AG04450 (cell line): ENCODE measurements at regions of chr11 and their contacts with region 1.

Region 1: DNA sequence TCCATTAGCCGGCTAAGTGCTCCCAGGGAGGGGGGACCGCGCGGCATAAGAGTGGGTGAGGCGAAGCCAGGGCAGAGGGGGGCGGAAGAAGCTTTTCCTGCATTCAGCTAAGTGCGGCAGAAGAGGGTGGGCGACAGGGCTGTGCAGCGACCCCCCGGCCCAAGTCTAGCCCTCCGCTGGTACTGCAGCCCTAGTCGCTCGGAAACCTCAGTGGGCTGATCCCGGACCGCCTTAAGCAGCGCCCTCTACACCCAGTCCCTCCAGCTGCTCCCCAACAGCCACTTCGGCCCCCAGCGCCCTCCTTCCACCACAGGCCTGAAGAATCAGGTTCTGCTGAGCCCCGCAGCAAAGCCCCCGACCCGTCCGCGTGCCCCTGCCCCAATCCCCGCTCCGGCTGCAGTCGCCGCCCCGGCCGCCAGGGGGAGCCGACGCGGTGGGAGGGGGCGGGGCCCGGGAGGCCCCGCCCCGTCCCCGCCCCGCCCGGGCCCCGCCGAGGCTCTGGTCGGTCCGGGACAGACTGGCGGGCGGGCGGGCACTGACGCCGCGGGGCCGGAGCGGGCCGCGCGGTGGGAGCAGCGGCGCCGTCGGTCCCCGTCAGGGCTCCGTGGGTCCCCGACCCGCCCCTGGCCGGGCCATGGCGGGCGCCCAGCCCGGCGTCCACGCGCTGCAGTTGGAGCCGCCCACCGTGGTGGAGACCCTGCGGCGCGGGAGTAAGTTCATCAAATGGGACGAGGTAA is at the start of gene PLCB3:
- DNase-seq: no peak
- H3K4me3 ChIP-seq: peak within 1 kb of the TSS; percentile 77
- H3K27ac ChIP-seq: peak within 1 kb of the TSS; percentile 11
- H3K27me3 ChIP-seq: no peaks in the 10 kb centered on the region
- CTCF ChIP-seq: peak; percentile 53
- polyA plus RNA-seq, gene PLCB3: 11.7 and 13.0 TPM in 2 replicates

Region 2: DNA sequence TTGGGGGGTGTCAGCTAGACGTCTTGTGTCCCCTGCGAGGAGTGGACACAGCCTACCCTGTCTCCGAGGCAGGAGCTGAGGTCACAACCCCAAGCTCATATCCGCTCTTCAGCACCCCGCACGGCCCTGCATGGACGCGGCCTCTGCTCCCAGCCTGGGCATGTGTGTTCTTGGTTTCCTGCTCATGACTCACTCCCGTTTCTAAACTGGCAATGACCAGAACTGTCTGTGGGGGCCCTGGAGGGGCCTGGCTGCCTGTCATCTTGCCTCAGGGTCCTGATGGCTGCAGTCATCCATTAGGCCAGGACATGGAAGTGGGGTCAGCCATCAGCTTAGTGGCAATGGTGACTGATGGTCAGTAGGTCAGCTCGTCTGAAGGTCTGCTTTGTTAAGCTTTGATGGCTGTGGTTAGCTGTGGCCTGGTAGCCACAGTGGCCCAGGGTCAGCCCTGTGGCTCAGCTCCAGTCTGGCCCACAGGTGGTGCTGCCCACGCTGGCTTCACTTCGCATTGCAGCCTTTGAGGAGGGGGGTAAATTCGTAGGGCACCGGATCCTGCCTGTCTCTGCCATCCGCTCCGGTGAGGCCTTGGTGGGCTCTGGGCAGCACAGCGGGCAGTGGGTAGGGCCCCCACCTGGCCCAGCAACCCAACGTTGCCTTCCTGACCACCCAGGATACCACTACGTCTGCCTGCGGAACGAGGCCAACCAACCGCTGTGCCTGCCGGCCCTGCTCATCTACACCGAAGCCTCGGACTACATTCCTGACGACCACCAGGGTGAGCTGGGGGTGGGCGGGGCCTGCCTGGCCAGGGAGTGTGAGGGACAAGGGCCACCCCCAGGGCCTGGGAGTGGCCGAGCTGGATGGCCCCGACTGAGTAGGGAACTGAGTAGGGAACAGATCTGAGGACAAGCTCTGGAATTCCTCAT is 12.1 kb after region 1 on chr11:
- CTCF ChIA-PET with region 1: interaction called, 23 read pairs
- POLR2A ChIA-PET with region 1: interaction called, 11 read pairs
- DNase-seq: no peak
- H3K4me3 ChIP-seq: no peak overlapping the region
- H3K27ac ChIP-seq: peak overlapping the region; percentile 2
- H3K27me3 ChIP-seq: no peaks in the 10 kb centered on the region
- CTCF ChIP-seq: no peak

Region 3: DNA sequence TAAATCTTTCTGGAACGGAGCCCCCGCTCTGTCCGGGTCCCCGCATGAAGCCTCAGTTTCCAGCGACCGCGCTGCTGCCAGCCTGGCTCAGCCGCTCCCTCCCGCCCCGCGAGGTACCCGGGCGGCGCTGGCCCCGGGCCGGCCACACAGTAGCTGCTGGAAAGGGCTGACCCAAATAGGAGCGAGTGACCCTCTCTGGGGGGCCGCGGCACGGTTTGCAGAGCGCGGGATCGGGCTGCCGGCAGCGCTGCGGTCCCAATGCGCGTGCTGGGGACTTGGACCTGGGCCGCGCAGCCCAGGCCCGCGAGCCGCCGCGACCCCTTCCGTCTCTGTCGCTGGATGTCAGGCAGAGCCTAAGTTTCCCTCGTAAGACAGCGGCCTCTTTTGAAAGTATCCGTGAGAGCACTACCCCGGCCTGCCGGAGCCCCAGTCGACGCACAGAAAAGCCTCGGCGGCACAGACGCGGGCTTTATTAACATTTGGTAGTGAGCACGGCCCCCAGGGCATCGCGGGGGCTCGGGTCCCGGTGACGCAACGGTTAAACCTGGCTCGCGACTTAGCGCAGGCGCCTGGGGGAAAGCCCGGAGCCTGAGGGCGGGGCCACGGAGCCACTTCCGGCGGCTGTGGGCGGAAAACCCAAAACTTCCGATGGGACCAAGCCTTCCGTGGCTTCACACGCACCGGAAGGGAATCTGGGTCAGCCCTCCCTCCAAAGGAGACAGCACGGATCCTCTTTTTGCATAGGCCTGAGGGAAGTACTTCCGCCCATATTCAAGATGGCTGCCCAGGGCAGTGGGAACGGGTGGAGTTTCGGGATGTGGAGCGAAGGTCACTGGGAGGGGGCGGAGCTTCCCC is 18.4 kb after region 1 on chr11:
- CTCF ChIA-PET with region 1: interaction called, 23 read pairs
- POLR2A ChIA-PET with region 1: interaction called, 11 read pairs
- DNase-seq: peak; percentile 100
- H3K4me3 ChIP-seq: peak overlapping the region; percentile 74
- H3K27ac ChIP-seq: peak overlapping the region; percentile 95
- H3K27me3 ChIP-seq: no peaks in the 10 kb centered on the region
- CTCF ChIP-seq: no peak; the same call in 1 of the 2 replicates

Region 4: GRCh38 chr11:64652586-64653387 is 401.6 kb after region 1 on chr11:
- CTCF ChIA-PET with region 1: interaction called, 10 read pairs
- POLR2A ChIA-PET with region 1: no interaction called
- DNase-seq: peak; percentile 26
- H3K4me3 ChIP-seq: no peak overlapping the region
- H3K27ac ChIP-seq: no peak overlapping the region
- H3K27me3 ChIP-seq: peaks cover 12% of the 10 kb centered on the region
- CTCF ChIP-seq: peak; percentile 96

Region 5: GRCh38 chr11:64675450-64676260 is 424.5 kb after region 1 on chr11:
- CTCF ChIA-PET with region 1: no interaction called
- POLR2A ChIA-PET with region 1: no interaction called
- DNase-seq: no peak
- H3K4me3 ChIP-seq: no peak overlapping the region
- H3K27ac ChIP-seq: no peak overlapping the region
- H3K27me3 ChIP-seq: peaks cover 61% of the 10 kb centered on the region
- CTCF ChIP-seq: no peak